ENCODE measurements at regions of chr3 and their contacts with region 1.

Region 1: GRCh38 chr3:156071031-156071430 is 49.3 kb upstream of the KCNAB1 start:
- DNase-seq: no peak
- H3K4me3 ChIP-seq: no peak overlapping the region
- H3K27ac ChIP-seq: no peak overlapping the region
- H3K4me1 ChIP-seq: no peaks in the 10 kb centered on the region
- H3K27me3 ChIP-seq: no peaks in the 10 kb centered on the region
- CTCF ChIP-seq: no peak
- EP300 ChIP-seq: no peak
- POLR2A ChIP-seq: no peak

Region 2: GRCh38 chr3:156037356-156037755 is 33.7 kb before region 1 on chr3:
- intact Hi-C with region 1: no loop called
- DNase-seq: no peak
- H3K4me3 ChIP-seq: no peak overlapping the region
- H3K27ac ChIP-seq: no peak overlapping the region
- H3K4me1 ChIP-seq: no peaks in the 10 kb centered on the region
- H3K27me3 ChIP-seq: no peaks in the 10 kb centered on the region
- CTCF ChIP-seq: no peak
- EP300 ChIP-seq: no peak
- POLR2A ChIP-seq: no peak

Region 3: DNA sequence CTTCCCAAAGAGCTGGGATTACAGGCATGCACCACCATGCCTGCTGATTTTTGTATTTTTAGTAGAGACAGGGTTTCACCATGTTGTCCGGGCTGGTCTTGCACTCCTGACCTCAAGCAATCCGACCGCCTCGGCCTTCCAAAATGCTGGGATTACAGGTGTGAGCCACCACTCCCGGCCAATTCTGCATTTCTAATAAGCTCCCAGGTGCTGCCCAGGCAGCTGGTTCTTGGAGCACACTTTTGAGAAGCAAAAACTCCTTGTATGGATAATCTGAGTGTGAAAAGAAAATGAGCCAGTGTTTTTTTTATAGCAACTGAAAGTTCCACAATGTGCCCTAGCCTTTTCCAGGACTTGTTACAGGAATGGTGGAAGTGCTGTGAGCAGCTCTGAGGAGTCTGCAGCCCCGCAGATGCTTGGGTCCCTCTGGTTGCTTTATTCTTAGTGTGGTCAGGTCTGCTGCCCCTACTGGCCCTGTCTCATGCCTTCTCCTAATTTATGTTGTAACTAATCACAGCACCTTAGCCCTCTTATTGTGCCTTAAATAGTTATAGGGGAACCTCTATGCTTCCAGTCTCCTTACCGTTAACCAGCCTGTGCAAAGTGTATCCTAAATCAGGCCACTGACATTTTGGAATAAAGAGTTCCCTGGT is 35.8 kb after region 1 on chr3:
- intact Hi-C with region 1: loop called in 1 of 4 experiments (anchors 2 kb)
- DNase-seq: no peak
- H3K4me3 ChIP-seq: no peak overlapping the region
- H3K27ac ChIP-seq: no peak overlapping the region
- H3K4me1 ChIP-seq: peaks cover 3% of the 10 kb centered on the region
- H3K27me3 ChIP-seq: no peaks in the 10 kb centered on the region
- CTCF ChIP-seq: no peak
- EP300 ChIP-seq: no peak
- POLR2A ChIP-seq: no peak

Region 4: GRCh38 chr3:156246938-156247725 is 176.1 kb after region 1 on chr3:
- intact Hi-C with region 1: no loop called
- DNase-seq: no peak
- H3K4me3 ChIP-seq: no peak overlapping the region
- H3K27ac ChIP-seq: no peak overlapping the region
- H3K4me1 ChIP-seq: no peaks in the 10 kb centered on the region
- H3K27me3 ChIP-seq: no peaks in the 10 kb centered on the region
- CTCF ChIP-seq: no peak
- EP300 ChIP-seq: no peak
- POLR2A ChIP-seq: no peak

Measured in ovary (tissue), 10 donors.